Left ventricle myocardium superior (tissue), 1 donor: ENCODE measurements at regions of chr18 and their contacts with region 1.

Region 1: GRCh38 chr18:13611601-13612195 is 114.7 kb downstream of the FAM210A start:
- DNase-seq: peak; percentile 83
- ATAC-seq: peak; percentile 84

Region 2: DNA sequence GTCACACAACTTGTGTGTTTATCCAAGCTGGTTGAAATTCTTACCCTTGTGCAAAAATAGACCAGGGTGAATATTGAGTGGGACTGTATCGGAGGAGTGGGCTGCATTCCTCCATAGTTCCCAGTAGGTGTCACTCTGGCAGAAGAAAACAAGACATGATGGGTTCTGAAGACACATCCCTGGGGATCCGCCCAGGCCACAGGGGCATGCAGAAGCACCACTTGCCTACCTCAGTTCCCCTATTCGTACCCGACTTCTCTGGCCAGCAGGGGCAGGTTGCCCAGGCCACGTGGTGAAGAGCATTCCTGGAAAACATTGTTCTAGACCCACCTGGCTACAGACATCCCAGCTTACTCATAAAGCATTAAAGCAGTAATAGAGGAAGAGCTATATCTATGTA is 53.6 kb before region 1 on chr18:
- intact Hi-C with region 1: loop called (anchors 10 kb)
- DNase-seq: peak; percentile 63
- ATAC-seq: peak; percentile 82

Region 3: GRCh38 chr18:13915995-13916431 is 304.3 kb after region 1 on chr18:
- intact Hi-C with region 1: no loop called
- DNase-seq: peak; percentile 53
- ATAC-seq: peak; percentile 89